Activated T-helper 1 cell treated with anti-CD3 and anti-CD28 coated beads, Interleukin-12 subunit alpha, Interleukin-12 subunit beta, Interleukin-2, Interleukin-4 antibody, amounts not matched to agents 30 ng/mL and 10 ng/mL and 1 ng/mL, durations not matched to agents 14 hours and 24 hours and 36 hours (primary cell): ENCODE measurements at regions of chr15 and their contacts with region 1.

Region 1: DNA sequence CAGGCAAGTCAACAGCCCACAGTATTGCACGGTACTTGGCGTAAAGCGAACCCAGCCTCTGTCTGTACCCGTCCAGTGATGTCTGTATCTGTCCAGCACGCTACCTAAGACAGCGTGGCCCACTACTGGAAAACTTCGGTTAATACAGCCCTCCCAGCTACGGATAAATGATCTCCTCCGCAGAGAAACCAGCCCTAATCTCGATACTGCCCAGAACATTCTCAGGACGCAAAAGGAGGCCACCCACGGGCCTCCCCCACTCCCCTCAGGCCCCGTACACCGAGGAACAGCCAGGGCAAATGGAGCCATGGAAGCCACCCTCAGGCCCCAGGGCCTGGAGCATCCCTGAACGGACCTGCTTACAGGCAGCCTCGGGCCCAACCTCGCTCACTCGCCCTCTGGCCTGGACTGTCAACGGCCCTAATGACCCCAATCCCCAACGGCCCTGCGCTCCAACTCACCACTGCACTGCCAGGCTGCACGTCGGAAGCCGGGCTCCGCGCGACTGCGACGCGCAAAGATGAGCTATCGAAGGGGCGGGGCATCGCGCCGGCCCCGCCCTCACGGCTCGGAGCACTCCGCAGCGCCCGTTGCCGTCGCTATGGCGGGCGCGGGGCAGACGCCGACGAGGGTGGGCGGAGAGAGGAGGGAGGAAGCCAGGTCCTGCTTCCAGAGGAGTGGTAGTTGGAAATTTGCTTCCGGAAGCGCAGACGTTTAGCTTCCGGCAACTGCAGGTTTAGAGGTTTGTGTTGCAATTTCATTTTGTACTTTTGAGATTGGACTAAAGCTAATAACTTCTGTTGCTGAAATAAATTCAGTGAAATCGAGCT is at the start of gene SKIC8:
- DNase-seq: peak; percentile 90
- H3K4me3 Mint-ChIP-seq: peak within 1 kb of the TSS; percentile 96
- H3K27ac Mint-ChIP-seq: peak within 1 kb of the TSS; percentile 94
- H3K4me1 Mint-ChIP-seq: peaks cover 31% of the 10 kb centered on the region
- H3K27me3 Mint-ChIP-seq: peaks cover 3% of the 10 kb centered on the region
- total RNA-seq, gene SKIC8: 54.3 and 57.3 TPM in 2 replicates

Region 2: DNA sequence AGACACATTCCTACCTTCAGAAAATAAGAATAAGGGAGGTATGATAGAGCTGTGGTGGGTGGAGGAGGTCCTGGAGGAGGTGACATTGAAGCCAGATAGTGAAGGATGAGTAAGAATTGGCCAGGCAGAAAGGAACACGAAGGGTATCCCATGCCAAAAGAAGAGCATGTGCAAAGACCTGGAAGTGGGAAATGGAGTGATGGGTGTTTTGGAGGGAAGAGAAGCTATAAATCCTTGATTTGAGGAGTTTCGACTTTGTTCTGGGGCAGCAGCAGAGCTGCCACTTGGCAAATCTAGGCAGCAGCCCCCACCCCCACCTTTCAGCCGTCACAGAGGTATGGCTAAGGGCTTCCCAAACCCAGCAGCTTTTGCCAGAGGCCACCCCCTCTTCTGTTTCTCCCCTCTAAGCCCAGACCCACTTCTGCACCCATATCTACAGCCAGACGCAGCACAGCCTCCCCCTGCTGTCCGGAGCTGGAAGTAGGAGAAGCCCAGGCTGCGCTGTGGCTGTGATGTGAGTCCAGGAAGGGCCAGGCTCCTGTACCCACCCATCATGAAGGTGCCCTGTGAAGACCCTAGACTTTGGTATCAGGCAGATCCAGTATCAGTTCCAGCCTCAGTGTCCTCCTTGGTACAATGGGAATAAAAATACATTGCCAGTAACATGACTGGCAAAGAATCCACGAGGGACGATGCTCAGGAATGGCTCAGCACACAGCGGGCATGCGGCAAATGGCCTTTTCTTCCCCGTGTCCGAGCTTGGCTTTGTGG is 477.9 kb before region 1 on chr15:
- intact Hi-C with region 1: no loop called
- DNase-seq: no peak
- H3K4me3 Mint-ChIP-seq: no peak overlapping the region
- H3K27ac Mint-ChIP-seq: no peak overlapping the region
- H3K4me1 Mint-ChIP-seq: no peaks in the 10 kb centered on the region
- H3K27me3 Mint-ChIP-seq: peaks cover 33% of the 10 kb centered on the region

Region 3: DNA sequence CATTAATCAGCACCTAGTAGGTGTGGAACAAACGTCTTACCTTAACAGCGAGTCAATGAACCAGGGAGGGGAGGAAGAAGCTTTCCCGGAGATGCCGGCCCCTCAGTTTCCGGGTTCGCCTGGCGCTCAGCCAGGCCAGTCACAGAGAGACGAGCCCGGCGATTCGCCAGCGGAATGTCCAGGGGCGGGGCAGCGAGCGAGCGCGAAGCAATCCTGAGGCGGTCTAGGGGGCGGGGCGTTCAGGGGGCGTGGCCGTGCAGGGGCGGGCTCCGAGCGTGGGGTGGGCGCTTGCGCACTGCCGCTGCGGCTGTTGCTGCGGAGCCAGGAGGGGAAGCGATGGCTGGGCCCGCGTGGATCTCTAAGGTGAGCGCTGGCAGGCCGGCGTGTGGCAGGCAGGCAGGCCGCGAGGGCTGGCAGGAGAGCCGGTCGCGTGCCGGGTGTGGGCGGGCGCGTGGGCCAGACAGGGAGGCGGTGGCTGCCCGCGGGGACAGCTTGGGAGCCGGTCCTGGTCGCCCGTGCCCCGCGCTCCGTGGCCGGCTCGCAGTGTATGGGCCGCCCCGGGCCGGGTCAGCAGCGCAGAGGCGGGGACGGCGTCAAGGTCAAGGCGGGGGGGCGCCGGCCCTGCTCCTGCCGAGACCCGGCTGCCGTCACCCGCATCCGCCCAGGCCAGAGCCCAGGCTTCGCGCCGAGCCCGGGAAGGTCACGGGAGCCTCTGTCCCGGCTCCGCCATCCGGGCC is 150.1 kb before region 1 on chr15 and contains the start of gene IDH3A:
- intact Hi-C with region 1: loop called (anchors 1 kb)
- DNase-seq: peak; percentile 99
- H3K4me3 Mint-ChIP-seq: peak within 1 kb of the TSS; percentile 94
- H3K27ac Mint-ChIP-seq: peak within 1 kb of the TSS; percentile 89
- H3K4me1 Mint-ChIP-seq: peaks cover 41% of the 10 kb centered on the region
- H3K27me3 Mint-ChIP-seq: no peaks in the 10 kb centered on the region
- total RNA-seq, gene IDH3A: 160 and 163 TPM in 2 replicates

Region 4: GRCh38 chr15:78265752-78266593 is 33.3 kb before region 1 on chr15:
- intact Hi-C with region 1: loop called (anchors 1 kb)
- DNase-seq: no peak
- H3K4me3 Mint-ChIP-seq: peak overlapping the region; percentile 90
- H3K27ac Mint-ChIP-seq: peak overlapping the region; percentile 21
- H3K4me1 Mint-ChIP-seq: peaks cover 36% of the 10 kb centered on the region
- H3K27me3 Mint-ChIP-seq: no peaks in the 10 kb centered on the region

Region 5: DNA sequence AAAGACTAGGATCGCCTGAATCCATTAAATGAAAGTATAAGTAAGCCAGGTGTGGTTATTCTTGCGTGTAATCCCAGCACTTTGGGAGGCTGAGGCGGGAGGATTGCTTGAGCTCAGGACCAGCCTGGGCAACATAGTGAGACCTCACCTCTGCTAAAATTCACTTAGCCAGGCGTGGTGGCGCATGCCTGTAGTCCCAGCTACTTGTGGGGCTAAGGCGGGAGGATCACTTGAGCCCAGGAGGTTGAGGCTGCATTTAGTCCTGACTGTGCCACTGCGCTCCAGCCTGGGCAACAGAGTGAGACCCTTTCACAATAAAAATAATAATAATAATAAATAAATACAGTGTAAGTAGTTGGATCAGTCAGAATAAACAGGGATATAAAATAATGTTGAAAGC is 182.6 kb after region 1 on chr15:
- intact Hi-C with region 1: loop called (anchors 5 kb)
- DNase-seq: no peak
- H3K4me3 Mint-ChIP-seq: no peak overlapping the region
- H3K27ac Mint-ChIP-seq: no peak overlapping the region
- H3K4me1 Mint-ChIP-seq: no peaks in the 10 kb centered on the region
- H3K27me3 Mint-ChIP-seq: no peaks in the 10 kb centered on the region

Region 6: GRCh38 chr15:78540141-78540928 is 241.0 kb after region 1 on chr15 and contains the start of gene PSMA4:
- intact Hi-C with region 1: loop called (anchors 1 kb)
- DNase-seq: peak; percentile 92
- H3K4me3 Mint-ChIP-seq: peak within 1 kb of the TSS; percentile 97
- H3K27ac Mint-ChIP-seq: peak within 1 kb of the TSS; percentile 100
- H3K4me1 Mint-ChIP-seq: peaks cover 42% of the 10 kb centered on the region
- H3K27me3 Mint-ChIP-seq: no peaks in the 10 kb centered on the region
- total RNA-seq, gene PSMA4: 317 and 318 TPM in 2 replicates